ENCODE measurements at regions of chr7 and their contacts with region 1.

Region 1: DNA sequence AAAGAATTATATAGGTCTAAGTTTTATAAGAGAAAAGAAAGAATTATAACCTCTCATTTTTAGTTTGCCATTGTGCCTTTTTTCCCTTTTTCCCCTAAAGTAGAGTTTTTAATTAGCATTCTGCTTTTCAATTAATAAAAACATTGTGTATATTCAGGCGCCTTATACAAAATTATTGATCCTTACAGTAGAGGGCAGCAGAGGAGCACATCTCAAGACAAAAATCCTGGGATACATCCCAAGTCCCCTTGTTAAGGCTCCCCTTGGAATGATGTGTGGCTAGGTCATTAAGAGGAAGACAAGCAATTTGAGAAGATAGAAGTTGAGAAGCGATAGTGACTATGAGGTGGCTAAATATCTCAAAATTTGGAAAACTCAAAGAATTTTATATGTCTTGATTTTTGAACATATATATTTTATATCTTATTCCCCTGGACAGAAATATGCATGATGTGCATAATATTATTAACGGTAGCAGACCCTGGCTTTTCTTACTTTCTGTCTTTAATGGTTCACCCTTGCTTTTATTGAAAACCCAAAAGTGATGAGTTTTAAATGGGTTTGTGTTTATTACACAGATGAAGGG is 19.1 kb upstream of the TPK1 start:
- DNase-seq: no peak
- H3K4me3 ChIP-seq: no peak overlapping the region
- H3K27ac ChIP-seq: no peak overlapping the region
- H3K4me1 ChIP-seq: no peaks in the 10 kb centered on the region
- H3K27me3 ChIP-seq: no peaks in the 10 kb centered on the region
- CTCF ChIP-seq: peak in 8 of 11 experiments; percentile 10 to 44 (median 36)
- POLR2A ChIP-seq: no peak

Region 2: GRCh38 chr7:144670218-144670617 is 184.7 kb before region 1 on chr7:
- intact Hi-C with region 1: no loop called
- DNase-seq: no peak
- H3K4me3 ChIP-seq: no peak overlapping the region
- H3K27ac ChIP-seq: no peak overlapping the region
- H3K4me1 ChIP-seq: no peaks in the 10 kb centered on the region
- H3K27me3 ChIP-seq: no peaks in the 10 kb centered on the region
- CTCF ChIP-seq: peak in 2 of 11 experiments; percentile 5 to 13
- POLR2A ChIP-seq: no peak

Region 3: GRCh38 chr7:144747936-144748335 is 107.0 kb before region 1 on chr7:
- intact Hi-C with region 1: loop called (anchors 10 kb)
- DNase-seq: no peak
- H3K4me3 ChIP-seq: no peak overlapping the region
- H3K27ac ChIP-seq: no peak overlapping the region
- H3K4me1 ChIP-seq: no peaks in the 10 kb centered on the region
- H3K27me3 ChIP-seq: no peaks in the 10 kb centered on the region
- CTCF ChIP-seq: no peak
- POLR2A ChIP-seq: no peak

Region 4: GRCh38 chr7:144941127-144941526 is 86.2 kb after region 1 on chr7:
- intact Hi-C with region 1: no loop called
- DNase-seq: no peak
- H3K4me3 ChIP-seq: no peak overlapping the region
- H3K27ac ChIP-seq: no peak overlapping the region
- H3K4me1 ChIP-seq: no peaks in the 10 kb centered on the region
- H3K27me3 ChIP-seq: no peaks in the 10 kb centered on the region
- CTCF ChIP-seq: no peak
- POLR2A ChIP-seq: no peak

Measured in spleen (tissue), 13 donors.